H1 (cell line): ENCODE measurements at regions of chr10 and their contacts with region 1.

Region 1: DNA sequence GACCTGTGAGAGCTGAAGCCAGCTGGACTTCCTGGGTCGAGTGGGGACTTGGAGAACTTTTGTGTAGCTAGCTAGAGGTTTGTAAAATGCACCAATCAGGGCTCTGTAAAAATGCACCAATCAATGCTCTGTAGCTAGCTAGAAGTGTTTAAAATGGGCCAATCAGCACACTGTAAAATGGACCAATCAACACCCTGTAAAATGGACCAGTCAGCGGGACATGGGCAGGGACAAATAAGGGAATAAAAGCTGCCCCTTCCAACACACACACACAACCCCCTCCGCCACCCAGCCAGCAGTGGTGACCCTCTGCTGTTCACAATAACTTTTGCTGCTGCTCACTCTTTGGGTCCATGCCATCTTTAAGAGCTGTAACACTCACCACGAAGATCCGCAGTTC is 7.1 kb downstream of the ZNF511 start:
- DNase-seq: no peak
- H3K4me3 ChIP-seq: no peak overlapping the region
- H3K27ac ChIP-seq: no peak overlapping the region
- H3K4me1 ChIP-seq: no peaks in the 10 kb centered on the region; a peak in 1 of 7 replicates
- H3K27me3 ChIP-seq: peaks cover 0 to 8% (median 4%) of the 10 kb centered on the region in 4 experiments; a peak in 5 of 7 replicates
- CTCF ChIP-seq: no peak
- EP300 ChIP-seq: no peak
- POLR2A ChIP-seq: no peak
- RAD21 ChIP-seq: no peak

Region 2: DNA sequence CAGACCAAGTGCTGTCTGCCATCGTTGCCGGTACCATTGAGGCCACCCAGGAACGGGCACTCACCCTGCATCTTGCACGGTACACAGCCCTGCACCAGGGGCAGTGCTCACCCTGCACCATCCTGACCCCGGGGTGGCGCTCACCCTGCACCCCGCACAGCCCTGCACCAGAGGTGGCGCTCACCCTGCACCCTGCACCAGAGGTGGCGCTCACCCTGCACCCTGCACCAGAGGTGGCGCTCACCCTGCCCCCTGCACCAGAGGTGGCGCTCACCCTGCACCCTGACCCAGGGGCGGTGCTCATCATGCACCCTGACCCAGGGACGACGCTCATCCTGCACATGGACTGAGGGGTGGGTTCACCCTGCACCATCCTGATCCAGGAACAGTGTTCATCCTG is 13.6 kb before region 1 on chr10:
- CTCF ChIA-PET with region 1: interaction called, 10 read pairs
- POLR2A ChIA-PET with region 1: interaction called, 3 read pairs
- DNase-seq: no peak
- H3K4me3 ChIP-seq: no peak overlapping the region
- H3K27ac ChIP-seq: no peak overlapping the region
- H3K4me1 ChIP-seq: peaks cover 0 to 4% (median 0%) of the 10 kb centered on the region in 4 experiments; a peak in 1 of 7 replicates
- H3K27me3 ChIP-seq: no peaks in the 10 kb centered on the region
- CTCF ChIP-seq: no peak; a peak in 1 of 4 replicates
- EP300 ChIP-seq: no peak
- POLR2A ChIP-seq: no peak
- RAD21 ChIP-seq: no peak

Region 3: DNA sequence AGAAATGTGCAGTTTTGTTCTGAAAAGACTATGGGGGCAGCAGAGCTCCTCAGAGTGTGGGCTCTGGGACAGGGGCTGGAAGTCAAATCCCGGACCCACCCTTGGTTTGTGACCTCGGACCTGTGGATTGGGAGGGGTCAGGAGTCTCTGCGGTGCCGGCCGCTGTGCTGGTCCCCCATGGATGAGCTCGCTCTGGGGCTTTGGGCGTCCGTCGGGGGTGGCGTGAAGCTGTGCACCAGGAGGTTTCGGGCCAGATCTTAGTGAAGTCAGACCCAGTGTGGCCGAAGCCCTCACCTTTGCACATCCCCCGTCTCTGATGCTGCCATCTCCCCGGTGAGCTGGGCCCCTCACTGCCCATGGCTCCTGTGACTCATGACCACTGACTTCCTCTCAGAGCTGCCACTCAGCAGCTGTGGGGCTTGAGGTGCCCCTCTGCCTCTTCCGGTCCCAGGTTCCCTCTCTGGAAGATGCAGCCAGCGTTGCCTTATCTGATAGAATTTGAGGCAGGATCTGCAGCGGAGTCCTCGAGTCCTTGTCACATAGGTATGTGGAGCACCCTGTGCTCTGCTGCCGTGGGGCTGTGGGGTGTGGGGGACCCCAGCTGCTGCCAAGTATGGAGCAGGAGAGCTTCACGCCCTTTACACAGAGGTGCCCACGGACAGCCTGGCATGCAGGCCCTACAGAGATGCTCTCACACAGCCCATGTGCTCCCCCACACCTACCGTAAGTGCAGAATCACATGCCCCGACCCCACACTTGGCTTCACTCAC is 126.5 kb after region 1 on chr10:
- CTCF ChIA-PET with region 1: no interaction called
- POLR2A ChIA-PET with region 1: no interaction called
- DNase-seq: no peak
- H3K4me3 ChIP-seq: no peak overlapping the region
- H3K27ac ChIP-seq: no peak overlapping the region
- H3K4me1 ChIP-seq: no peaks in the 10 kb centered on the region
- H3K27me3 ChIP-seq: 0 out of 7 replicates have a peak, but pooled peaks cover 0 to 2% (median 0%) of the 10 kb centered on the region in 4 experiments
- CTCF ChIP-seq: no peak
- EP300 ChIP-seq: no peak
- POLR2A ChIP-seq: no peak
- RAD21 ChIP-seq: no peak